ENCODE measurements at regions of chr1 and their contacts with region 1.

Region 1: GRCh38 chr1:89701746-89702241 is 68.9 kb downstream of the LRRC8C start:
- DNase-seq: no peak
- H3K4me3 Mint-ChIP-seq: peak overlapping the region; percentile 12
- H3K27ac Mint-ChIP-seq: peak overlapping the region; percentile 72
- H3K4me1 Mint-ChIP-seq: peaks cover 83% of the 10 kb centered on the region
- H3K27me3 Mint-ChIP-seq: no peaks in the 10 kb centered on the region

Region 2: GRCh38 chr1:89465201-89465600 is 236.6 kb before region 1 on chr1:
- intact Hi-C with region 1: no loop called
- DNase-seq: no peak
- H3K4me3 Mint-ChIP-seq: no peak overlapping the region
- H3K27ac Mint-ChIP-seq: no peak overlapping the region
- H3K4me1 Mint-ChIP-seq: peaks cover 40% of the 10 kb centered on the region
- H3K27me3 Mint-ChIP-seq: peaks cover 53% of the 10 kb centered on the region

Region 3: DNA sequence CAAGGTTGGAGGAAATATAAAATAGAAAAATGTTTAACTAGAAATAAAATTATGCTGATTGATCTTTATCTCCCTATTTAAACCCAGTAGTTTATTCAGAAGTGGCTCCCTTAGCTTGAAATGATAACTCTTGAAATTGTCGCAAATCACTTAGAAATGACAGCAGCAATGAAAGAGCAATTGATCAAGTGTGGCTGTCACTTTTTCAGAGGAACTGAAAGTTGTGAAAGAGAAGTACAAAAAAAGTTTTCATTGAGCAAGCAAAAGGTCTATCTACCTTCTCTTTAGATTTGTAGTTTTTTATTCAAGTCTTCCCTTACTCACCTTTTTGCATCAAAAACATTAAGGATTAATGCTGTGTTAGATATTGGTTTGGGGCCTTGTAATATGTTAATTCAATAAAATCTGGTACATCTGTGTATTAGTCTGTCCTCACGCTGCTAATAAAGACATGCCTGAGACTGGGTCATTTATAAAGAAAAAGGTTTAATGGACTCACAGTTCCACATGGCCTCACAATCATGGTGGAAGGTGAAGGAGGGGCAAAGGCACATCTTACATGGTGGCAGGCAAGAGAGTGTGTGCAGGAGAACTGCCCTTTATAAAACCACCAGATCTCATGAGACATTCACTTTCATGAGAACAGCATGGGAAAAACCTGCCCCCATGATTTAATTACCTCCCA is 20.6 kb before region 1 on chr1:
- intact Hi-C with region 1: no loop called
- DNase-seq: no peak
- H3K4me3 Mint-ChIP-seq: no peak overlapping the region
- H3K27ac Mint-ChIP-seq: no peak overlapping the region
- H3K4me1 Mint-ChIP-seq: peaks cover 54% of the 10 kb centered on the region
- H3K27me3 Mint-ChIP-seq: no peaks in the 10 kb centered on the region

Region 4: DNA sequence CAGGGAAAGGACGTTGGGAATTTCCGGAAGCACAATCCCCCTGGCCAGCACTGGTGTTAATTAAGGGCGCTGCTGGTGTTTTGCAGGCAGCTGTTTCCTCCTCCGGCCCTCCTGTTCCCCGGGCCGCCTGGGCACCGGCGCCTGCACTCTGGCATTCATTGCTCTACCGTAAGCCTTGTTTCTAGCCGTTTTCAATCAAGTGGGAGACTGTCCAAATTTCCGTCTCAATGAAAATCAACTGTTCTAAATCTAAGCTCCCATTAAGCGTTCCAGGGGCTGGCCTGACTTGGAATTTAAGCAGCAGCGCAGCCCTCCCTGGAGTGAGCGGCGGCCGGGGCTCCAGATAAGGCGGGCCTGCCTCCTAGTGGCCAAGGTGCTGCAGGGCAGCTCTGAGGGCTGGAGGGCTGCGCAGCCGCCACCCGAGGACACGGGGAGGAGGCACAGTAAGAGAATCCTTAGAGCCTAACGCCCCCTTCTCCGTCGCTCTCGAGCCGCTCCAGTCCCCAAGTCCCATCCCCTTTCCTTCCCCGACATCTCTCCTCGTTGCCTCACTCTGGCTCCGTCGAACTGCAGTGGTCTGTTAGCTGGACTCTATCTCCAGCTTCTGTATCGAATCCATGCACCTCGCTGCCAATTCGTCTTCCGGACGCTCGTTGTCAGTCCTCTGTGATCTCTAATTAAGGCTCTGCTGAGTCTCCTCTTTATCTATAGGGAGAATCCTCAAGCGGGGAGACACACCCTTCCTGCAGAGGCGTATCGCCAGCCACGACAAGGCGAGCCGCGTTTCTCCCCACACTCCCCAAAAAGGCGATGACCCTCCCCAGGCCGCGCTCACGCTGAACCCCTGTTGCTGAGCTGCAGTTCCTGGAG is 61.2 kb after region 1 on chr1:
- intact Hi-C with region 1: loop called (anchors 2 kb)
- DNase-seq: peak; percentile 78
- H3K4me3 Mint-ChIP-seq: peak overlapping the region; percentile 92
- H3K27ac Mint-ChIP-seq: peak overlapping the region; percentile 93
- H3K4me1 Mint-ChIP-seq: peaks cover 63% of the 10 kb centered on the region
- H3K27me3 Mint-ChIP-seq: no peaks in the 10 kb centered on the region